ENCODE measurements at regions of chr9 and their contacts with region 1.

Region 1: GRCh38 chr9:33623658-33624586 is 99.9 kb downstream of the ANKRD18B start:
- DNase-seq: peak; percentile 82
- ATAC-seq: peak; percentile 92
- H3K4me3 ChIP-seq: no peak overlapping the region
- H3K4me3 Mint-ChIP-seq: no peak overlapping the region
- H3K27ac ChIP-seq: no peak overlapping the region
- H3K27ac Mint-ChIP-seq: no peak overlapping the region
- H3K4me1 ChIP-seq: no peaks in the 10 kb centered on the region
- H3K4me1 Mint-ChIP-seq: no peaks in the 10 kb centered on the region
- H3K27me3 ChIP-seq: peaks cover 0 to 13% (median 7%) of the 10 kb centered on the region in 4 experiments
- H3K27me3 Mint-ChIP-seq: peaks cover 40% of the 10 kb centered on the region
- CTCF ChIP-seq: peak; percentile 87

Region 2: DNA sequence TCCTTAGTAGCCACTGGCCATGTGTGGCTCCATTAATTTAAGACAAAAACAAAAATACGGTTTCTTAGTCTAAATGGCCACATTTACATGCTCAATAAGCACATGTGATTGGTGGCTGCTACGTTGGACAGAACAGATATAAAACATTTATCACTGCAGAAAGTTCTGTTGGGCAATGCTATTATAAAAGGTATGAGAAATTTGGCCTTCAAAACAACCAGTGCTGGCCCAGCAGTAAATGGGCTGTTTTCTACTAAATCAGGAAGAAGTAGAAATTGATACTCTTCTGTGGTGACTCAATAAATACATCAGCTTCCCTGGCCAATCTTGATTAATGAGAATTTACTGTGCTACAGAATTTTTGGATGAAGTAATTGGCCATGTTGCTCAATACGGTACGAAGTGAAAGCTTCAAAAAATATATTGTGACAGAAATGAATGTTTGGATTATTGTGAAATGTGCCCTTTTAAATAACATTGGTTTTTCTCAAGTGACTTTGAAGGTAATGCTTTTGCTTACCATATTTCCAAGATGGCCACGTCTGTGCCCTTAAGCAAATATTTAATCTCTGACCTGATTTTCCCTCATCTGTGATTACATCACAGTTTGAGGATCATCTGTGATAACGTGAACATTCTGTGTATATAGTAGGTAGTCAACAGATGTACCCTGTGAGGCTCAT is 594.7 kb before region 1 on chr9:
- CTCF ChIA-PET with region 1: no interaction called
- POLR2A ChIA-PET with region 1: no interaction called
- intact Hi-C with region 1: no loop called
- DNase-seq: no peak
- ATAC-seq: no peak
- H3K4me3 ChIP-seq: no peak overlapping the region
- H3K4me3 Mint-ChIP-seq: no peak overlapping the region
- H3K27ac ChIP-seq: no peak overlapping the region
- H3K27ac Mint-ChIP-seq: no peak overlapping the region
- H3K4me1 ChIP-seq: peaks cover 13 to 26% of the 10 kb centered on the region in 2 donors
- H3K4me1 Mint-ChIP-seq: peaks cover 40% of the 10 kb centered on the region
- H3K27me3 ChIP-seq: no peaks in the 10 kb centered on the region
- H3K27me3 Mint-ChIP-seq: no peaks in the 10 kb centered on the region
- CTCF ChIP-seq: no peak

Region 3: GRCh38 chr9:33638391-33638915 is 14.5 kb after region 1 on chr9:
- CTCF ChIA-PET with region 1: interaction called, 15 read pairs
- POLR2A ChIA-PET with region 1: no interaction called
- intact Hi-C with region 1: no loop called
- DNase-seq: no peak
- ATAC-seq: no peak
- H3K4me3 ChIP-seq: no peak overlapping the region
- H3K4me3 Mint-ChIP-seq: no peak overlapping the region
- H3K27ac ChIP-seq: no peak overlapping the region
- H3K27ac Mint-ChIP-seq: no peak overlapping the region
- H3K4me1 ChIP-seq: no peaks in the 10 kb centered on the region
- H3K4me1 Mint-ChIP-seq: no peaks in the 10 kb centered on the region
- H3K27me3 ChIP-seq: peaks cover 0 to 27% (median 18%) of the 10 kb centered on the region in 4 experiments
- H3K27me3 Mint-ChIP-seq: peaks cover 65% of the 10 kb centered on the region
- CTCF ChIP-seq: no peak

Region 4: DNA sequence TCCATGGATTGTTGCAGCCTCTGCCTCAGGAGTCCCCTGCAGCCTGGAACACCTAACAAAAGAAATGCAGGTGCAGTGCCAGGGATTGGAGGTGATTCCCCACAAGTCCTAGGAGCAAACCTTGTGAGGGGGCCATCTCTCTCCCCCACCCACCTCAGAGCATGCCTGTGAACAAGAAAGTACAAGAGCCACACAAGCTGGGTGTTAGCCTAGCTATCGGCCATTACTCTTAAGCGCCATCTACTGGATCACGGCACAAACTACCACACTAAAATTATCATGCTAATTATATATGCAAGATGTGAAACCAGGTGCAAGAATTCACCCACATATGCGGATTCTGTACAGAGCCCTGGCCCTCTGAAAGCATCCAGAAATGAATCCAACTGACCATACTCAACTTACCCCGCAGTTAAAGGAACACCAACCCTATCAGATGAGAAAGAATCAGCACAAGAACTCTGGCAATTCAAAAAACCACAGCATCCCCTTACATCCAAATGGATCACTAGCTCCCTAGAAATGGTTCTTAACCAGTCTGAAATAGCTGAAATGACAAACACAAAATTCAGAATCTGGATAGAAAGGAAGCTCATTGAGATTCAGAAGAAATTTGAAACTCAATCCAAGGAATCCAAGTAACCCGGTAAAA is 154.9 kb after region 1 on chr9:
- CTCF ChIA-PET with region 1: interaction called, 13 read pairs
- POLR2A ChIA-PET with region 1: no interaction called
- intact Hi-C with region 1: no loop called
- DNase-seq: peak; percentile 73
- ATAC-seq: peak; percentile 79
- H3K4me3 ChIP-seq: no peak overlapping the region
- H3K4me3 Mint-ChIP-seq: no peak overlapping the region
- H3K27ac ChIP-seq: no peak overlapping the region
- H3K27ac Mint-ChIP-seq: no peak overlapping the region
- H3K4me1 ChIP-seq: peaks cover 0 to 3% of the 10 kb centered on the region in 2 donors
- H3K4me1 Mint-ChIP-seq: peaks cover 5% of the 10 kb centered on the region
- H3K27me3 ChIP-seq: no peaks in the 10 kb centered on the region
- H3K27me3 Mint-ChIP-seq: peaks cover 9% of the 10 kb centered on the region
- CTCF ChIP-seq: peak; percentile 90

Region 5: GRCh38 chr9:34025062-34025461 is 401.1 kb after region 1 on chr9:
- CTCF ChIA-PET with region 1: interaction called, 4 read pairs
- POLR2A ChIA-PET with region 1: no interaction called
- intact Hi-C with region 1: loop called (anchors 10 kb)
- DNase-seq: no peak
- ATAC-seq: no peak
- H3K4me3 ChIP-seq: no peak overlapping the region
- H3K4me3 Mint-ChIP-seq: no peak overlapping the region
- H3K27ac ChIP-seq: no peak overlapping the region
- H3K27ac Mint-ChIP-seq: no peak overlapping the region
- H3K4me1 ChIP-seq: no peaks in the 10 kb centered on the region
- H3K4me1 Mint-ChIP-seq: no peaks in the 10 kb centered on the region
- H3K27me3 ChIP-seq: no peaks in the 10 kb centered on the region
- H3K27me3 Mint-ChIP-seq: no peaks in the 10 kb centered on the region
- CTCF ChIP-seq: no peak

Region 6: DNA sequence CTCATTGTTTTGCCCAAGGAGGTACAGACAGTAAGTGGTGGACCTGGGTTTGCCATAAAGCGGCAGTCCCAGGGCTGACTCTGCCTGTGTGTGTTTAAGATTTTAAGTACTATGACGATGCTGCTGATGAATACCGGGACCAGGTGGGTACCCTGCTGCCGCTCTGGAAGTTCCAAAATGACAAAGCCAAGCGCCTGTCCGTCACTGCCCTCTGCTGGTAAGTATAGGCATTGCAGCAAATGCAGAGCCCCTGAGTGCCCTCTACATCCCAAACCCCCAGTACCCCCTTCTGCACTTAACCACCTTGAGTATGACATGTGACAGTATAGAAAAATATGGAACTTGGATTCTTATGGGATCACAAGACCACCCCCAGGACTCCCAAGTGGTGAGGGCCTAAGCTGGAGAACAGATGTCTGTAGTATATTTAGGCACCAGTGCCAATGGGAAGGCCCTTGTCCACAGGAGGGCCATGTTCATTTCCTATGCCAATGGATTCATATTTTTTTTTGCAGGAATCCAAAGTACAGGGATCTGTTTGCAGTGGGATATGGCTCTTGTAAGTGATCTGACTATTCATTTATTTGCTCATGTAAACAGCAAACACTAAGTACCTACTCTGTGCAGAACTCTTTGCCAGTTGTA is 876.8 kb after region 1 on chr9:
- CTCF ChIA-PET with region 1: interaction called, 17 read pairs
- POLR2A ChIA-PET with region 1: no interaction called
- intact Hi-C with region 1: loop called (anchors 1 kb)
- DNase-seq: peak; percentile 78
- ATAC-seq: peak; percentile 86
- H3K4me3 ChIP-seq: no peak overlapping the region
- H3K4me3 Mint-ChIP-seq: no peak overlapping the region
- H3K27ac ChIP-seq: no peak overlapping the region
- H3K27ac Mint-ChIP-seq: no peak overlapping the region
- H3K4me1 ChIP-seq: peaks cover 0 to 3% of the 10 kb centered on the region in 2 donors
- H3K4me1 Mint-ChIP-seq: no peaks in the 10 kb centered on the region
- H3K27me3 ChIP-seq: peaks cover 0 to 10% (median 3%) of the 10 kb centered on the region in 4 experiments
- H3K27me3 Mint-ChIP-seq: peaks cover 38% of the 10 kb centered on the region
- CTCF ChIP-seq: peak; percentile 98